Activated CD4-positive, alpha-beta T cell treated with anti-CD3 and anti-CD28 coated beads, Interleukin-2, amount 10 ng/mL, durations not matched to agents 24 days and 14 days (primary cell): ENCODE measurements at regions of chr18 and their contacts with region 1.

Region 1: DNA sequence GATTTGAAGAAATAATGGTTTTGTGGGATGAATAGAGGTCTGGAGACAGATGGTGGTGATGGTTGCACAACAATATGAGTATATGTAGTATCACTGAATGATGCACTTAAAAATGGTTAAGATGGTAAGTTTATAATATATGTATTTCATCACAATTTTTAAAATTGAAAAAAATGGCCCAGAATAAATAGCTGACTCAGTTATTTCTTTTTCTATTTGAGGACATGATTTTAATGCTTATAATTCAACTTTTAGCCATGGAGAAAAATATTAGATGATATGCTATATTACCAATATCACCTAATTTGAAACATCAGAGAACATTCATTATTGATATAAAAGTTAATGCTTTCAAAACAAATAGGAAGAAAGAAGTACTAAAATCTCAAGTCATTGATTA is 339.8 kb upstream of the LINC00305 start:
- DNase-seq: no peak
- H3K4me3 Mint-ChIP-seq: no peak overlapping the region
- H3K27ac Mint-ChIP-seq: no peak overlapping the region
- H3K4me1 Mint-ChIP-seq: no peaks in the 10 kb centered on the region
- H3K27me3 Mint-ChIP-seq: no peaks in the 10 kb centered on the region

Region 2: GRCh38 chr18:64539847-64540246 is 51.1 kb after region 1 on chr18:
- intact Hi-C with region 1: loop called (anchors 10 kb)
- DNase-seq: no peak
- H3K4me3 Mint-ChIP-seq: no peak overlapping the region
- H3K27ac Mint-ChIP-seq: no peak overlapping the region
- H3K4me1 Mint-ChIP-seq: no peaks in the 10 kb centered on the region
- H3K27me3 Mint-ChIP-seq: no peaks in the 10 kb centered on the region